ENCODE measurements at regions of chr7 and their contacts with region 1.

Region 1: GRCh38 chr7:93147363-93147762 is 822 bp downstream of the SAMD9L start:
- DNase-seq: peak; percentile 22
- H3K4me3 Mint-ChIP-seq: peak overlapping the region; percentile 93
- H3K27ac Mint-ChIP-seq: peak overlapping the region; percentile 87
- H3K4me1 Mint-ChIP-seq: peaks cover 68% of the 10 kb centered on the region
- H3K27me3 Mint-ChIP-seq: no peaks in the 10 kb centered on the region

Region 2: DNA sequence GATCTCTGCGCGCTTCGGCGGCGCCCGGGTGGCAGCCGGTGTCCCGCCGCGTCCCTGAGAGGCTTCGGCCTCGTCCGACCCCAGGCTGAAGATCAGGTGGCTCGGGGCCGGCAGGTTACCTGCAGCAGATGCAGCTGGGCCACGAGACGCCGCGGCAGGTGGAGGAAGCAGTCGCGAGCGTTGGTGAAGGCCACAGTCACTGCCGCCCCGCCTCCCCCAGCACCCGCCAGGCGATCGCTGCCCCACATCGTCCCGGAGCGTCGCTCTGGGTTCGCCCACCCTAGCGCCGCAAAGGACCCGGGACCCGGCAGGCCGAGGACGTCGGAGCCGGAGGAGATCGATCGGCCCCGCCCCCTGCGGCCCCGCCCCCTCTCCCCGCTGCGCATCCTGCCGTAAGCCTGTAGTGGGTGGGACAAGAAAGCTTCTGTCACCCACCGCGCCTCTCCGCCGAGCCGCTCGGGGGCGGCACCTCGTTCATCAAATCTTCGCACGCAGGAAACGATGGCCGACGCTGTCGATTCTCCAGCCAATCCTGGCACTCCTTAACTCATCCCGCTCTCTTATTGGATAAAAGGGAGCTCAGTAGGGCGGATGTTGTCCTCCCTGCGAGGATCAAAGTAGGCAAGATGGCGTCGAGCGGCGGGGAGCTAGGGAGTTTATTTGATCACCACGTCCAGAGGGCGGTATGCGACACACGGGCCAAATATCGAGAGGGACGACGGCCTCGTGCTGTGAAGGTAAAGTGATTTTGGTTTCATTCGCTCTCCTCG is 619.0 kb before region 1 on chr7 and contains the starts of genes PEX1 and RBM48:
- intact Hi-C with region 1: loop called (anchors 2 kb)
- DNase-seq: peak; percentile 94
- H3K4me3 Mint-ChIP-seq: peak within 1 kb of the TSS; percentile 91
- H3K27ac Mint-ChIP-seq: peak within 1 kb of the TSS; percentile 94
- H3K4me1 Mint-ChIP-seq: peaks cover 24% of the 10 kb centered on the region
- H3K27me3 Mint-ChIP-seq: no peaks in the 10 kb centered on the region
- total RNA-seq, gene PEX1: 14.7 and 17.0 TPM in 2 replicates
- total RNA-seq, gene RBM48: 17.2 and 17.6 TPM in 2 replicates

Region 3: GRCh38 chr7:92590711-92591310 is 556.6 kb before region 1 on chr7:
- intact Hi-C with region 1: loop called (anchors 5 kb)
- DNase-seq: no peak
- H3K4me3 Mint-ChIP-seq: peak overlapping the region; percentile 92
- H3K27ac Mint-ChIP-seq: no peak overlapping the region
- H3K4me1 Mint-ChIP-seq: peaks cover 37% of the 10 kb centered on the region
- H3K27me3 Mint-ChIP-seq: peaks cover 5% of the 10 kb centered on the region

Region 4: DNA sequence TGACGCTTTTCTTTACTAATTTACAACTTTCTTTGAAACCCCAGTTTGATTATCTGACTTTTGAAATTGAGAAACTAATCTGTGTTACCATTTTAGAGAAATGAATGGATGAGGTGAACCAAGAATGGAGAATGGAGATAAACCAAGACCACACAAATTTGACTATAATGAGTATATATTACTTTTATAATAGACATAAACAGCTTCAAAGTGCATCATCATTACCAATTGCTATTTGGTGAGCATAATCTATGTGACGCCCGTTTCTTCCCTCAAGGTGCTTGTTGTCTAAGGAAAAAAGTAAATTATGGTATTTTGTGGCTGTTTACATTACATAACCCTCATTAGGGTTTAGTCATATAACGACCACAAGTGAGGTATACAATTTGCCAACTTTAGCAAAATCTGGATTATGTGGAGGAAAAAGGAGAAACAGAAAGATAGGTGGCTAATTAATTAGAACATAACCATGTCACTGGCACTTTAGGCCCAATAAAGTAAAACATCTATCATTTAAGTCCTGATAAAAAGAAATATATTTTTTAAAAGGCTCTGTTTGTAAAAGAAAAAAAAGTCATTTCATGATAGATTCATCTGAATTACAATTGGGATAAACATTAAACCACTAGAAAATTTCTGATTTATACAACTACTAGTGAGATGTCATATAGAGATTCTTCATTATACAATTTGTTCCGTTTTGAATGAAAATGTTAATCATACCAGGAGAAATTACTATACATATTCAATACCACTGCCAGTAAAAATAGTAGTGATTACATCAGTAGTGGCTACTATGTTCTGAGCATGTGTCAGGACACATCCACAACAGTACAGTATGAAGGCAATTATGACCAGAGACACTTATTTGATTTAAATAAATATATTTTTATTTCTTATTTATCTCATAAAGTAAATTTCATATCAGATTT is 439.0 kb before region 1 on chr7:
- intact Hi-C with region 1: loop called (anchors 1 kb)
- DNase-seq: no peak
- H3K4me3 Mint-ChIP-seq: no peak overlapping the region
- H3K27ac Mint-ChIP-seq: peak overlapping the region; percentile 84
- H3K4me1 Mint-ChIP-seq: peaks cover 59% of the 10 kb centered on the region
- H3K27me3 Mint-ChIP-seq: no peaks in the 10 kb centered on the region

Region 5: DNA sequence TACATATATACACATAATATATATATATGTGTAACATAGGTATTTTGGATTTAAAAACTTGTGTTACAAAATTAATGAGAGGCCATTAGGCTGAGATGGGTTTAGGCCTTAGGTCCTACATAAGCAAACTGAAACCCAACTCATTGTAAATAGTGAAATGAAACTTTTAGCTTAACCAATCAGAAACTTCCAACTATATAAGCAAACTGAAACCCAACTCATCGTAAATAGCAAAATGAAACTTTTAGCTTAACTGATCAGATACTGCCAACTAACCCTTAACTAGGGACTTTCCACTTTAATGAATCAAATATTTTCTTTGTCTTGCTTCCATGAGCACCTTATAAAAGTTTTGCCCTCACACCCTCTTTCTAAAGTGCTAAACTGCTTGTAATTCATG is 18.1 kb after region 1 on chr7:
- intact Hi-C with region 1: loop called (anchors 2 kb)
- DNase-seq: no peak
- H3K4me3 Mint-ChIP-seq: no peak overlapping the region
- H3K27ac Mint-ChIP-seq: no peak overlapping the region
- H3K4me1 Mint-ChIP-seq: no peaks in the 10 kb centered on the region
- H3K27me3 Mint-ChIP-seq: peaks cover 2% of the 10 kb centered on the region

Measured in activated T-helper 1 cell treated with anti-CD3 and anti-CD28 coated beads, Interleukin-12 subunit alpha, Interleukin-12 subunit beta, Interleukin-2, Interleukin-4 antibody, amounts not matched to agents 30 ng/mL and 10 ng/mL and 1 ng/mL, durations not matched to agents 14 hours and 24 hours and 36 hours (primary cell).